CD4-positive, alpha-beta T cell (primary cell): ENCODE measurements at regions of chr11 and their contacts with region 1.

Region 1: DNA sequence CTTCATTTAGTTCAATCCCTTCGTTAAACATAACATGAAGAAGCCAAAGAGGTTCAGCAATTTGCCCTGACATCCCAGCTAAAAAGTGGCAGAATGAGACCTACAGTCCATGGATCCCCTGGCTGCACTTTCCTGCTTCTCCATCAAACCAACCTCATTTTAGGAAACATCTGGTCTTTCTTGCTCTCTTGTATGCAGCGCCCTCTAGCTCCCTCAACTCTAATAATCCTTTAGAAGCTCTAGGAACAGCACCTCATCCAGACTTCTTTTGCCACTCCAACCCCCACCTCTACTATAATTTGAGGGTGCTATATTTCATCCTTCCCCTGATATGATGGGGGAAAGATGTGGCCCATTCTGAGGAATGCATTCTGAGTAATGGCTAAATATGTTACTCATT is 7.4 kb downstream of the CNTF start:
- DNase-seq: peak in 5 of 14 experiments; percentile 3 to 63 (median 41)
- ATAC-seq: peak; percentile 56
- H3K4me3 ChIP-seq: no peak overlapping the region
- H3K4me3 Mint-ChIP-seq: no peak overlapping the region
- H3K27ac ChIP-seq: no peak overlapping the region
- H3K27ac Mint-ChIP-seq: peak overlapping the region; percentile 61
- H3K4me1 ChIP-seq: no peaks in the 10 kb centered on the region
- H3K4me1 Mint-ChIP-seq: peaks cover 5% of the 10 kb centered on the region
- H3K27me3 ChIP-seq: no peaks in the 10 kb centered on the region
- H3K27me3 Mint-ChIP-seq: no peaks in the 10 kb centered on the region
- CTCF ChIP-seq: peak; percentile 54

Region 2: GRCh38 chr11:57941875-57942274 is 688.0 kb before region 1 on chr11:
- CTCF ChIA-PET with region 1: no interaction called
- POLR2A ChIA-PET with region 1: no interaction called
- intact Hi-C with region 1: no loop called
- DNase-seq: no peak
- ATAC-seq: no peak
- H3K4me3 ChIP-seq: no peak overlapping the region
- H3K4me3 Mint-ChIP-seq: no peak overlapping the region
- H3K27ac ChIP-seq: no peak overlapping the region
- H3K27ac Mint-ChIP-seq: no peak overlapping the region
- H3K4me1 ChIP-seq: no peaks in the 10 kb centered on the region
- H3K4me1 Mint-ChIP-seq: no peaks in the 10 kb centered on the region
- H3K27me3 ChIP-seq: peaks cover 0 to 6% of the 10 kb centered on the region in 2 experiments
- H3K27me3 Mint-ChIP-seq: peaks cover 17% of the 10 kb centered on the region
- CTCF ChIP-seq: no peak

Region 3: DNA sequence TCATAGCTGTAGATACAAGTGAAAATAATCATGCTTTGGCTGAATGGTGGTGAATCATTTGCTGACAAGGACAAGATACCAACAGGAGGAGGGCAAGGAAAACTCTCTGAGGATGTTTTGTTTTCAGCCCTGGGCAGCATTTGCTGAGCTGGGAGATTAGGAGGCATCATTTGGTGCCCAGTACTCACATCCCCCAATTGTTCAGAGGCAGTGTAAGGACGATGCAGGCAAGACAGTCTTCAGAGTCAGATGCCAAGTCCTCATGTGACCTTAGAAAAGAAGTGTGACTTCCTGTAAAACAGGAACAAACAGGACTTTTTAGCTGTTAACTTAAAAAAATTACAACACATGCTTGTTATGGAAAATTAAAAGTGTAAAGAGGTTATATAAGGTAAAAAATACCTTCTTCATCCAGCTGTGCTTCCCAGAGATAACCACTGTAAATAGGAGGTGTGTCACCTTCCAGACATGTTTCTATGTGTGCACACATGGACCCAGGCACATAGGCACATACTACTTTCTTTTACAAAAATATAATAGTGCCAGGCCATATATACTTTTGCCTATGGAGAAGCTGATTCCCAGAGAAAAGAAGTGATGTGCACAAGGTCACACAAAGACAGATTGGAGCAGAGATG is 10.6 kb after region 1 on chr11:
- CTCF ChIA-PET with region 1: no interaction called
- POLR2A ChIA-PET with region 1: interaction called, 15 read pairs
- intact Hi-C with region 1: no loop called
- DNase-seq: peak in 5 of 14 experiments; percentile 6 to 66 (median 32)
- ATAC-seq: peak; percentile 76
- H3K4me3 ChIP-seq: no peak overlapping the region
- H3K4me3 Mint-ChIP-seq: peak overlapping the region; percentile 27
- H3K27ac ChIP-seq: peak overlapping the region; percentile 8 to 27
- H3K27ac Mint-ChIP-seq: peak overlapping the region; percentile 74
- H3K4me1 ChIP-seq: peaks cover 15% of the 10 kb centered on the region
- H3K4me1 Mint-ChIP-seq: peaks cover 32% of the 10 kb centered on the region
- H3K27me3 ChIP-seq: no peaks in the 10 kb centered on the region
- H3K27me3 Mint-ChIP-seq: no peaks in the 10 kb centered on the region
- CTCF ChIP-seq: no peak

Region 4: DNA sequence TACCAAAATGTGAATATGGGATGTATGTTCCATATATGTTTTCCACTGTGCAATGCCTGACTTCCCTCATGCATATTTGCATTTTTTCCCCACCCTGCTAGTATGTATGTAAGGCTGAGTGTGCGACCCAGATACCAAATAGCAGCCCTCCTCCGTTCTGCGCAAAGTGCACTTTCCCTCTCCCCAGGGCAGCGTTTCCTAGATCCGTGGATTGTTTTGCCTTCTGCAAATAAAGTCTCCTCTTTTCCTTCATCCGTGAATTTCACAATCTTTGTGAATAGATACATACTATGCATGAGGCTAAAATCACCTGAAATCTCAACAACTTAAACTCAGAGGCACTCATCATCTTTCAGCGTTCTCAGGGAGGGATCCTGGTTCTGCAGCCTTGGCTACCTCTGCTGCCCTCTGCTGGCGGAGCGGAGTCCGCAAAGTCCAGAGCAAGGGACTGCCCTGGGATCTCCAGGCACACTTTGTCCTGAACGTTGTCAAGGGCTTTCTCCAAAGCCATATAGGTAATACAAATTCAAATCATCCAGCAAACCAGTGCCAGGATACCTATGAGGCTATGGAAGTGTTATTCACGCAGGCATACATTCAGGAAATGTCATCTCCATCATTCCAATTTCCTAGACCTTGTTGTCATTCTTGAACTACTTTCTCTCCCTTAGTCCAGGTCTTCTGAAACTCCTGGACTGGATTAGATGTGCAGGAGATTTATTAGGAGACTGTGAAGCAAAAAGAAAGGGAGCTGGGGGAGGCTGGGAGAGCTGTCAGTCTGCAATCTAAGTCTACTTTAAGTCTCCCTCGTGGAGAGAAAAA is 45.7 kb after region 1 on chr11:
- CTCF ChIA-PET with region 1: no interaction called
- POLR2A ChIA-PET with region 1: no interaction called
- intact Hi-C with region 1: no loop called
- DNase-seq: peak; percentile 55 to 82 (median 70)
- ATAC-seq: peak; percentile 76
- H3K4me3 ChIP-seq: no peak overlapping the region
- H3K4me3 Mint-ChIP-seq: no peak overlapping the region
- H3K27ac ChIP-seq: no peak overlapping the region
- H3K27ac Mint-ChIP-seq: no peak overlapping the region
- H3K4me1 ChIP-seq: peaks cover 4% of the 10 kb centered on the region
- H3K4me1 Mint-ChIP-seq: no peaks in the 10 kb centered on the region
- H3K27me3 ChIP-seq: peaks cover 8 to 13% of the 10 kb centered on the region in 2 experiments
- H3K27me3 Mint-ChIP-seq: no peaks in the 10 kb centered on the region
- CTCF ChIP-seq: peak; percentile 93